Activated CD4-positive, alpha-beta memory T cell treated with anti-CD3 and anti-CD28 coated beads for 36 hours (primary cell): ENCODE measurements at regions of chr5 and their contacts with region 1.

Region 1: GRCh38 chr5:96536991-96537785 is 104.1 kb upstream of the PCSK1 start:
- DNase-seq: no peak
- H3K4me3 Mint-ChIP-seq: peak overlapping the region; percentile 2
- H3K27ac Mint-ChIP-seq: peak overlapping the region; percentile 68
- H3K4me1 Mint-ChIP-seq: peaks cover 33% of the 10 kb centered on the region
- H3K27me3 Mint-ChIP-seq: no peaks in the 10 kb centered on the region

Region 2: DNA sequence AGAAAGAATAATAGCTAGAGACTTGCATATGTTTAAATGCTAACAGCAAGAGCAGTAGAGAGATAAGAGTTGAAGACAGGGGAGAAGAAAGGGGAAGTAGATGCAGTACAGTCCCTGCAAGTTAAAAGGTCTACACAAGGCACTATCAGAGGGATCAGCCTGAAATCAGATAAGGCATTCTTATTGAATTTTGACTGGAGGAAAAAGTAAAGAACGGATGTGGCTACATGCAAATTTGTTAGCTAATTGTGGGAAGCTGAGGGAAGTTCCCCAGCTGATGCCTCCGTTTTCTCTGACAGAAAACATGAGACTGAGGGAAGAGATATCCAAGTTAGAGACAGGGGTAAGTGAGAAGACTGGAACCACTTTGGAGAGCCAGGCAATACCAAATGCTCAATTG is 819.0 kb before region 1 on chr5:
- CTCF ChIA-PET with region 1: no interaction called
- POLR2A ChIA-PET with region 1: no interaction called
- intact Hi-C with region 1: loop called (anchors 5 kb)
- DNase-seq: peak; percentile 35
- H3K4me3 Mint-ChIP-seq: no peak overlapping the region
- H3K27ac Mint-ChIP-seq: no peak overlapping the region
- H3K4me1 Mint-ChIP-seq: peaks cover 16% of the 10 kb centered on the region
- H3K27me3 Mint-ChIP-seq: peaks cover 7% of the 10 kb centered on the region

Region 3: DNA sequence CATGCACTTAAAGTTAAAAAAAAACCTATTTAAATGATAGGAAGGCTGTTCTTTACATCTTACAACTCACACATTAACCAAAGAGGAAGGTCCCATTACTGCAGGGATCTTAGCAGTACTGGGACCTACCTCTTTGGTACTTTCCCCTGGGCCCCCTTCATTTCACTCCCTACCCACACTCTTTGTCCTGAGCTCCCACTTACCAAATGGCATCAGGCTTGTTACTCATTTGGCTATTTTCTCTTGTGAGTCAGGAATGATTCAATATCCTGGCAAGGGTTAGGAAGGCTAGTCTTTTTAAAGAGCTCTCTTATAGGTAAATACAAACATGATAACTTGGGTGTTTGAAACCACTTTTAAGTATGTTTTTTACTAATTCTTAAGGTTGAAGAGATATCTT is 458.1 kb before region 1 on chr5:
- CTCF ChIA-PET with region 1: no interaction called
- POLR2A ChIA-PET with region 1: no interaction called
- intact Hi-C with region 1: loop called (anchors 5 kb)
- DNase-seq: peak; percentile 67
- H3K4me3 Mint-ChIP-seq: no peak overlapping the region
- H3K27ac Mint-ChIP-seq: peak overlapping the region; percentile 89
- H3K4me1 Mint-ChIP-seq: peaks cover 45% of the 10 kb centered on the region
- H3K27me3 Mint-ChIP-seq: peaks cover 5% of the 10 kb centered on the region

Region 4: DNA sequence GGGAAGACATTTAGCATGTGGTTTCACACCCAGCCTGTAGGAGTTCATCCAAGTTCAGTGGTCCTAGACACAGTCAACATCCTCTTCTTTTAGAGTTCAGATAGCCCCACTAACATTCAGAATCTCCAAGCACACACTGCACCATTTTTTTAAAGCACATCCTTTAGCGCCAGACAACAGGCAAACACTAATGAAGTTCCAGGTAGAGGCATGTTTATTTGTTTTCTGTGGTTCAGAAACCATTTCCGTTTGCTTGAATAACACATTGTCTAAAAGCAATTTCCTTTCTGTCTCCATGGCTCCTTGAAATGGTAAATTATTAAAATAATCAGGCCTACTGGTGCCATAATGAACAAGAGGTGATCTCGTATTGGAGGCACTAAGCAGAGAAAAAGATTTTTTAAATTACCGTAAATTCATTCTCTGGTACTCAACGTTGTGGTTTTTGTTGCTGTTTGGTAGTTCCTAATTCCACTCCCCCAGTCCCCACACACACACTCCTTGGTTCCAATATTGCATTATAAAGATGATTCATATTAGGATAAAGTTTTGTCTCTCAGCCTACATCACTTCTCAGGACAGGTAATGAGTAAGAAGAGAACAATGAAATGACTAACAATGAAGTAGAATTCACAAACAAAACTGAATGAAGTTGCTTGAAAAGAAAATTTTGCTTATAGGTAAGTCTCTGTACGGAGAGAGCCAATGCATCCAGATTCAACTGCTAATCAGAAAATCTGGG is 257.2 kb before region 1 on chr5:
- CTCF ChIA-PET with region 1: no interaction called
- POLR2A ChIA-PET with region 1: no interaction called
- intact Hi-C with region 1: loop called (anchors 1 kb)
- DNase-seq: peak; percentile 51
- H3K4me3 Mint-ChIP-seq: peak overlapping the region; percentile 7
- H3K27ac Mint-ChIP-seq: peak overlapping the region; percentile 31
- H3K4me1 Mint-ChIP-seq: peaks cover 26% of the 10 kb centered on the region
- H3K27me3 Mint-ChIP-seq: peaks cover 29% of the 10 kb centered on the region

Region 5: GRCh38 chr5:96595300-96596090 is 58.3 kb after region 1 on chr5:
- CTCF ChIA-PET with region 1: no interaction called
- POLR2A ChIA-PET with region 1: no interaction called
- intact Hi-C with region 1: loop called (anchors 5 kb)
- DNase-seq: no peak
- H3K4me3 Mint-ChIP-seq: no peak overlapping the region
- H3K27ac Mint-ChIP-seq: no peak overlapping the region
- H3K4me1 Mint-ChIP-seq: peaks cover 13% of the 10 kb centered on the region
- H3K27me3 Mint-ChIP-seq: peaks cover 3% of the 10 kb centered on the region

Region 6: DNA sequence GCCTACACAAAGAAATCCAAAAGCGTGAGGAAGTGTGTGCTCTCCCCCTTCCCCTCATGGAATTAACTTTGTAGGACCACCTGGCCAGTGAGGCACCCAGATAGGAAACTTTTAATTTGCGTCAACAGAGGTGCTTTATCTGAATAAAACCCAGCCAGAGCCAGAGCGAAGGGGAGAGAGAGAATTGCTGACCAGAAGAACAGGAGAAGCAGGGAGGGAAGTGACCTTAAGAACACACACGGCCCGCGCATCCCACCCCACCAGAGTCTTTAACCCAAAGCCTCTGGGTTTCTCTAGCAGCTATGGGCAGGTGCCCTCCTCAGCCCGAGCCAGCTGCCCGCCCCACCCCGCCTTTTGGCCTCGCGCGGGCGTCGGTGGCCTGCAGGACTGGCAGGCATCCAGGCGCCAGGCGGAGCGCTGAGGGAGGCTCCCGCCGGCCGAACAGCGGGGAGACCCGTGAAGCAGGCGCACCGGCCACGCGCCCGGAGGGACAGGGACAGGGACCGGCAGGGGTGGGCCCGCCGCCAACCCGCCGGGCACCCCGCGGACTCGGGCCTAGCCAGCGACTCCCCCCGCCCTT is 270.0 kb after region 1 on chr5:
- CTCF ChIA-PET with region 1: no interaction called
- POLR2A ChIA-PET with region 1: no interaction called
- intact Hi-C with region 1: loop called (anchors 10 kb)
- DNase-seq: peak; percentile 59
- H3K4me3 Mint-ChIP-seq: peak overlapping the region; percentile 94
- H3K27ac Mint-ChIP-seq: peak overlapping the region; percentile 98
- H3K4me1 Mint-ChIP-seq: peaks cover 72% of the 10 kb centered on the region
- H3K27me3 Mint-ChIP-seq: no peaks in the 10 kb centered on the region